Natural killer cell (primary cell): ENCODE measurements at regions of chr12 and their contacts with region 1.

Region 1: DNA sequence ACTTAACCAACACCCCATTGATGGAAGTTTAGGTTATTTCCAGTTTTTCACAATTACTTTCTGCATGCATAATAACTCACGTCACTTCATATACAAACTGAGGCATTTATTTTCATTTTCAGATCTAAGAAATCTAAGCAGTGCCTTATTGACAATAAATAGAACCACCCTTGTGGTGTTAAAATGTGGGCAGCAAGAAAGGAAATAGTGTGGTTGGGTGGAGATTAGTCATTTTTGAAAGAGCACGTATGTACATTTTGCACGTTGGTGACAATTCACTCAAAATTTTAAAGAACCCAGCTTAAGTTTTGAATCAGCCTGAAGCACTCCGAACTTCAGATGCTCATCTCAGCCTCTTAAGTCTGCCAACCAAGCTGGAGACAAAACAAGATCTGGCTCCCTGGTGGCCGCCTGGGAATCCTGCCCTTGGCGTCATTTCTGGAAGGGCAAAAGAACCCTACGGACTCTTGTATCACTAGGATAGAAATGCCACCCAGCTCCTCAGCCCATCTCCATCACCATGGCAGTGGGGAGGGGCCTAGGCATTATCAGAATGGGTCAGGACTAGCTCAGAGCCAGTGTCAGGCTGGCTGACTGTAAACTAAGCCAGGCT is 89.5 kb upstream of the BCL2L14 start:
- DNase-seq: peak; percentile 37 to 89
- ATAC-seq: peak; percentile 85 to 95 (median 91)
- H3K4me3 ChIP-seq: peak overlapping the region; percentile 20
- H3K4me3 Mint-ChIP-seq: peak overlapping the region; percentile 58
- H3K27ac ChIP-seq: peak overlapping the region; percentile 87
- H3K27ac Mint-ChIP-seq: peak overlapping the region; percentile 70 to 81
- H3K4me1 ChIP-seq: peaks cover 27% of the 10 kb centered on the region
- H3K4me1 Mint-ChIP-seq: peaks cover 41 to 43% of the 10 kb centered on the region in 2 donors
- H3K27me3 ChIP-seq: no peaks in the 10 kb centered on the region
- H3K27me3 Mint-ChIP-seq: peaks cover 28 to 42% of the 10 kb centered on the region in 2 donors
- CTCF ChIP-seq: no peak

Region 2: GRCh38 chr12:11545484-11546330 is 435.5 kb before region 1 on chr12:
- intact Hi-C with region 1: no loop called
- DNase-seq: peak in 1 of 2 donors; percentile 79
- ATAC-seq: peak; percentile 75 to 79 (median 78)
- H3K4me3 ChIP-seq: no peak overlapping the region
- H3K4me3 Mint-ChIP-seq: peak overlapping the region; percentile 65
- H3K27ac ChIP-seq: peak overlapping the region; percentile 81
- H3K27ac Mint-ChIP-seq: peak overlapping the region; percentile 81 to 89
- H3K4me1 ChIP-seq: peaks cover 28% of the 10 kb centered on the region
- H3K4me1 Mint-ChIP-seq: peaks cover 15 to 25% of the 10 kb centered on the region in 2 donors
- H3K27me3 ChIP-seq: no peaks in the 10 kb centered on the region
- H3K27me3 Mint-ChIP-seq: peaks cover 0 to 4% of the 10 kb centered on the region in 2 donors
- CTCF ChIP-seq: no peak

Region 3: DNA sequence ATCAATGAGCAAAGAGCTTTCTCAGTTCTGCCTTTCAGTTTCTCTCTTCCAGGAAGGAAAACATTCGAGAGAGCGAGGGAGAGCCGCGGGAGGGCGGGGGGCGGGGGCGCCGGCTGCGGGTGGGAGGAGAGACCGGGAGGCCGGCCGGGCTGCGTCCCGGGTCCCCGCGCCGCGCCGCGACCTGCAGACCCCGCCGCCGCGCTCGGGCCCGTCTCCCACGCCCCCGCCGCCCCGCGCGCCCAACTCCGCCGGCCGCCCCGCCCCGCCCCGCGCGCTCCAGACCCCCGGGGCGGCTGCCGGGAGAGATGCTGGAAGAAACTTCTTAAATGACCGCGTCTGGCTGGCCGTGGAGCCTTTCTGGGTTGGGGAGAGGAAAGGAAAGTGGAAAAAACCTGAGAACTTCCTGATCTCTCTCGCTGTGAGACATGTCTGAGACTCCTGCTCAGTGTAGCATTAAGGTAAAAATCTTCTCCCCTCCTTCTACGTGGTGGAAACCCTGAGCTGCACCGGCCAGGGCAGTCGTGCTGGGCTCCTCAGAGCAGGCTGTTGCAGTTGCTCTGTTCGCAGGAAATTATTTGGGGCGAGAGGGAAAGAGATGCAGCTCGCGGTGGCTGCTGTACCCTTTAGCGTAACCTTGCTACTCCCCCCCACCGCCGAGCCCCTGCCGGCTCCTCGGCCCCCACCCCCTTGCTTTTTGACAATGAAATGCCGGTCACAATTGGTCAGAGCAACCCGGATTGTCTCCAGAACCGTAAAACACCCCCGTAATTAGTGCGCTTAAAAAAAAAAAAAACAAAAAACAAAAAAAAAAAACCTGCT is 331.3 kb before region 1 on chr12:
- intact Hi-C with region 1: loop called (anchors 2 kb)
- DNase-seq: peak; percentile 26 to 65
- ATAC-seq: peak; percentile 25 to 59 (median 52)
- H3K4me3 ChIP-seq: peak overlapping the region; percentile 97
- H3K4me3 Mint-ChIP-seq: peak overlapping the region; percentile 98
- H3K27ac ChIP-seq: peak overlapping the region; percentile 91
- H3K27ac Mint-ChIP-seq: peak overlapping the region; percentile 88 to 95
- H3K4me1 ChIP-seq: peaks cover 31% of the 10 kb centered on the region
- H3K4me1 Mint-ChIP-seq: peaks cover 38 to 46% of the 10 kb centered on the region in 2 donors
- H3K27me3 ChIP-seq: no peaks in the 10 kb centered on the region
- H3K27me3 Mint-ChIP-seq: no peaks in the 10 kb centered on the region
- CTCF ChIP-seq: no peak

Region 4: GRCh38 chr12:11958221-11959091 is 22.8 kb before region 1 on chr12:
- intact Hi-C with region 1: loop called (anchors 1 kb)
- DNase-seq: peak; percentile 27 to 31
- ATAC-seq: peak; percentile 54 to 87 (median 86)
- H3K4me3 ChIP-seq: no peak overlapping the region
- H3K4me3 Mint-ChIP-seq: peak overlapping the region; percentile 10
- H3K27ac ChIP-seq: no peak overlapping the region
- H3K27ac Mint-ChIP-seq: peak overlapping the region in 1 of 2 donors; percentile 64
- H3K4me1 ChIP-seq: peaks cover 14% of the 10 kb centered on the region
- H3K4me1 Mint-ChIP-seq: peaks cover 27 to 30% of the 10 kb centered on the region in 2 donors
- H3K27me3 ChIP-seq: no peaks in the 10 kb centered on the region
- H3K27me3 Mint-ChIP-seq: peaks cover 20 to 45% of the 10 kb centered on the region in 2 donors
- CTCF ChIP-seq: no peak

Region 5: GRCh38 chr12:12010277-12011039 is 29.2 kb after region 1 on chr12:
- intact Hi-C with region 1: loop called (anchors 1 kb)
- DNase-seq: peak; percentile 49 to 77
- ATAC-seq: peak; percentile 69 to 84 (median 77)
- H3K4me3 ChIP-seq: peak overlapping the region; percentile 29
- H3K4me3 Mint-ChIP-seq: peak overlapping the region; percentile 88
- H3K27ac ChIP-seq: peak overlapping the region; percentile 65
- H3K27ac Mint-ChIP-seq: peak overlapping the region; percentile 46 to 82
- H3K4me1 ChIP-seq: peaks cover 49% of the 10 kb centered on the region
- H3K4me1 Mint-ChIP-seq: peaks cover 36 to 53% of the 10 kb centered on the region in 2 donors
- H3K27me3 ChIP-seq: peaks cover 3% of the 10 kb centered on the region
- H3K27me3 Mint-ChIP-seq: peaks cover 56 to 81% of the 10 kb centered on the region in 2 donors
- CTCF ChIP-seq: no peak

Region 6: DNA sequence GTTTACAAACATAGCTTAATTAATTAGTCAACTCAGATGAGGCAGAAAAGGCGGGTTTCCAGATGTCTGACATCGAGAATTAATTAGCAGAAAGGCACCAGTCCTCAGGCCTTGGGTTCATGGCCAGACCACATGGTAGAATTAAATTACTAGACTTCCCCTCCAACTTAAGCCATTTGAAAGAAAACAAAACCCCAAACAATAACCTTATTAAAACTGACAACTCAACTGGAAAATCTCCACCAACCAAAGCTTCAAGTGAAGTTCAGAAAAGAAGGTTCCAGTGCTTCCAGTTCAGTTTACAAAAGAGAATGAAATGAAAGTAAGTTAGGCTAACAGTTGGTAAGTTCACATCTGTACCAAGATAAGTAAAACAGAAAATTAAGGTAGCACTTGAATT is 1650.6 kb after region 1 on chr12:
- intact Hi-C with region 1: no loop called
- DNase-seq: no peak
- ATAC-seq: no peak
- H3K4me3 ChIP-seq: no peak overlapping the region
- H3K4me3 Mint-ChIP-seq: no peak overlapping the region
- H3K27ac ChIP-seq: no peak overlapping the region
- H3K27ac Mint-ChIP-seq: no peak overlapping the region
- H3K4me1 ChIP-seq: no peaks in the 10 kb centered on the region
- H3K4me1 Mint-ChIP-seq: no peaks in the 10 kb centered on the region
- H3K27me3 ChIP-seq: no peaks in the 10 kb centered on the region
- H3K27me3 Mint-ChIP-seq: no peaks in the 10 kb centered on the region
- CTCF ChIP-seq: no peak